ENCODE measurements at regions of chr20 and their contacts with region 1.

Region 1: DNA sequence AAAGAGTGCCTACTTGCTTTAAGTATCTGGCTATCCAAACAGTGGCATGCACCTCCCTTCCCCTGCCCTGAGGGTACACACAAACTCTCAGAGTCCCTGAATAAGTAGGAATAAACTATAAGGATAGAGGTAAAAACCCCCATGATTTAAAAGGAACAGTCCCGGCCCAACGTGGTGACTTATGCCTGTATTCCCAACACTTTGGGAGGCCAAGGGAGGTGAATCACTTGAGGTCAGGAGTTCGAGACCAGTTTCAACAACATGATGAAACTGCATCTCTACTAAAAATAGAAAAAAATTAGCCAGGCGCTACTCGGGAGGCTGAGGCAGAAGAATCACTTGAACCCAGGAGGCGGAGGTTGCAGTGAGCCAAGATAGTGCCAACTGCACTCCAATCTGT is 22.2 kb downstream of the SAMHD1 start:
- DNase-seq: no peak
- H3K4me3 ChIP-seq: no peak overlapping the region
- H3K27ac ChIP-seq: peak overlapping the region in 3 of 4 donors; percentile 6 to 46 (median 36)
- H3K4me1 ChIP-seq: peaks cover 2 to 64% (median 39%) of the 10 kb centered on the region in 4 donors
- H3K27me3 ChIP-seq: no peaks in the 10 kb centered on the region
- CTCF ChIP-seq: no peak
- EP300 ChIP-seq: no peak
- POLR2A ChIP-seq: no peak

Region 2: GRCh38 chr20:36821964-36822437 is 107.3 kb before region 1 on chr20:
- intact Hi-C with region 1: no loop called
- DNase-seq: no peak
- H3K4me3 ChIP-seq: no peak overlapping the region
- H3K27ac ChIP-seq: peak overlapping the region; percentile 65 to 77 (median 76)
- H3K4me1 ChIP-seq: peaks cover 44 to 73% (median 70%) of the 10 kb centered on the region in 4 donors
- H3K27me3 ChIP-seq: no peaks in the 10 kb centered on the region
- CTCF ChIP-seq: no peak
- EP300 ChIP-seq: no peak
- POLR2A ChIP-seq: no peak

Region 3: DNA sequence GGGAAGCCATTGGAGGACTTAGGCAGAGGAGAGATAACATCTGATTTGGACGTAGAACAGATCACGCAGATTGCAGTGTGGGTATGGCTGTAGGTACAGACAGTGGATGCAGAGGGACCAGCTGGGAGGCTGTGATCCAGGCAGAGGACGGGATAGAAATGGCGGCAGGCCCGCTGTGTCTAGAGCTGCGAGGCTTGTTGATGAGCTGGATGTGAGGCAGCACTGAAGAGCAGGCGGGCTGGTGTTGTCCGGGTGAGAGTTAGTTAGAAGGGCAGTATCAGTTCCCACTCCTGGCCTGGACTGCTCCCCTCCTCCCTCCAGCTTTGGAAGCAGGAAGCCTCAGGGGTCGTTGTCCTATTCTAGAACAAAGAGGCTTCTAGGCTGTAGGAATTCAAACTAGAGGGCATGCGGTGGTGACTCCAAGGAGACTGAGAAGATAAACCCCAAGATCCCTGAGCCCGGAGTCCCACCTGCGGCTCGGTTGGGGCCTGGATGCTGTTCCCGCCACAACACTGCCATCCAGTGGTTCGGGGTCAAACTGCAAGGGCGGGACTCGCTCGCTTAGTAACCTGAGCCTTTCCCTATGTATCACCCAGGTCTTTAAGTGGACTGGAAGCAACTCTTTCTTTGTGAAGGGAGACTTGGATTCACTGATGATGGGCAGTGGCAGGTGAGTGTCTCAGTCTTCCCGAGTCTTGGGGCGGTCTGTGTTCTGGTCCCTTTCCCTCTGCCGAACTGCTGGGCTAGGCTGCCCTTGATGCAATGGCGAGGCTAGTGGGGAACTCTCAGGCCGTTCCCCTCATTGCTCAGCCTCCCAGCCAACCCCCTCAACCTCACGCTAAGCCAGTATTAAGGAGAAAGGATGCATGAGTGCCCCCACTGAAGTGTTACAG is 42.2 kb before region 1 on chr20:
- intact Hi-C with region 1: loop called (anchors 5 kb)
- DNase-seq: peak; percentile 96
- H3K4me3 ChIP-seq: peak overlapping the region in 1 of 4 donors; percentile 12
- H3K27ac ChIP-seq: peak overlapping the region in 2 of 4 donors; percentile 45 to 62
- H3K4me1 ChIP-seq: peaks cover 9 to 18% (median 12%) of the 10 kb centered on the region in 4 donors
- H3K27me3 ChIP-seq: no peaks in the 10 kb centered on the region
- CTCF ChIP-seq: peak; percentile 94 to 98 (median 97)
- EP300 ChIP-seq: no peak
- POLR2A ChIP-seq: no peak